GM12878 (cell line): ENCODE measurements at regions of chr1 and their contacts with region 1.

Region 1: GRCh38 chr1:109570417-109570827 is 22.0 kb downstream of the GNAI3 start:
- DNase-seq: no peak
- ATAC-seq: no peak
- H3K4me3 ChIP-seq: no peak overlapping the region
- H3K27ac ChIP-seq: no peak overlapping the region
- H3K4me1 ChIP-seq: peaks cover 15% of the 10 kb centered on the region
- H3K27me3 ChIP-seq: no peaks in the 10 kb centered on the region
- CTCF ChIP-seq: no peak
- EP300 ChIP-seq: no peak
- POLR2A ChIP-seq: no peak
- RAD21 ChIP-seq: no peak

Region 2: DNA sequence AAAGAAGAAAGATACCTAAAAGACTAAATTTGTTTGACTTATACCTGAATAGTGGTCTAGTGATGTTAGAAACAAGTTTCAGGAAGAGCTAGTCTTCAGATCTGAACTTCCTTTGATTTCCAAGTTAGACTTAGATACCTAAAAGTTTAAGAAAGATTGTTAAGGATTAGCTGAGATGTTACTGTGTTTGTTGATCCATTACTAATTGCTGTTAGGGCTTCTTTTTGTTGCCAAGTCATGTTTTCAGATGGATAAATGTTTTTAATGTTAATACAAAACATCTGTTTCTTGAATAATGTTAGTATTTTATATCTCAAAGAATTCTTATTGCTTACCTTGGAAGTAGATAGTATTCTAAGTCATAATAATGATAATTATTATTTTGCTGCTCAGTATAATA is 10.4 kb before region 1 on chr1:
- CTCF ChIA-PET with region 1: interaction called, 7 read pairs
- POLR2A ChIA-PET with region 1: no interaction called
- RAD21 ChIA-PET with region 1: interaction called, 3 read pairs
- SMC1A ChIA-PET with region 1: interaction called, 12 read pairs
- in situ Hi-C with region 1: no loop called
- intact Hi-C with region 1: no loop called
- DNase-seq: no peak
- ATAC-seq: no peak
- H3K4me3 ChIP-seq: no peak overlapping the region
- H3K27ac ChIP-seq: no peak overlapping the region
- H3K4me1 ChIP-seq: peaks cover 4% of the 10 kb centered on the region; the same call in 1 of the 2 replicates
- H3K27me3 ChIP-seq: no peaks in the 10 kb centered on the region
- CTCF ChIP-seq: no peak
- EP300 ChIP-seq: no peak
- POLR2A ChIP-seq: no peak
- RAD21 ChIP-seq: no peak

Region 3: GRCh38 chr1:109718491-109718890 is 148.1 kb after region 1 on chr1:
- CTCF ChIA-PET with region 1: no interaction called
- POLR2A ChIA-PET with region 1: no interaction called
- RAD21 ChIA-PET with region 1: no interaction called
- SMC1A ChIA-PET with region 1: no interaction called
- in situ Hi-C with region 1: no loop called
- intact Hi-C with region 1: no loop called
- DNase-seq: no peak
- ATAC-seq: peak; percentile 28; the same call in 2 of the 3 replicates
- H3K4me3 ChIP-seq: no peak overlapping the region
- H3K27ac ChIP-seq: no peak overlapping the region
- H3K4me1 ChIP-seq: peaks cover 11% of the 10 kb centered on the region
- H3K27me3 ChIP-seq: no peaks in the 10 kb centered on the region
- CTCF ChIP-seq: no peak
- EP300 ChIP-seq: no peak
- POLR2A ChIP-seq: no peak
- RAD21 ChIP-seq: no peak